ENCODE measurements at regions of chr20 and their contacts with region 1.

Region 1: DNA sequence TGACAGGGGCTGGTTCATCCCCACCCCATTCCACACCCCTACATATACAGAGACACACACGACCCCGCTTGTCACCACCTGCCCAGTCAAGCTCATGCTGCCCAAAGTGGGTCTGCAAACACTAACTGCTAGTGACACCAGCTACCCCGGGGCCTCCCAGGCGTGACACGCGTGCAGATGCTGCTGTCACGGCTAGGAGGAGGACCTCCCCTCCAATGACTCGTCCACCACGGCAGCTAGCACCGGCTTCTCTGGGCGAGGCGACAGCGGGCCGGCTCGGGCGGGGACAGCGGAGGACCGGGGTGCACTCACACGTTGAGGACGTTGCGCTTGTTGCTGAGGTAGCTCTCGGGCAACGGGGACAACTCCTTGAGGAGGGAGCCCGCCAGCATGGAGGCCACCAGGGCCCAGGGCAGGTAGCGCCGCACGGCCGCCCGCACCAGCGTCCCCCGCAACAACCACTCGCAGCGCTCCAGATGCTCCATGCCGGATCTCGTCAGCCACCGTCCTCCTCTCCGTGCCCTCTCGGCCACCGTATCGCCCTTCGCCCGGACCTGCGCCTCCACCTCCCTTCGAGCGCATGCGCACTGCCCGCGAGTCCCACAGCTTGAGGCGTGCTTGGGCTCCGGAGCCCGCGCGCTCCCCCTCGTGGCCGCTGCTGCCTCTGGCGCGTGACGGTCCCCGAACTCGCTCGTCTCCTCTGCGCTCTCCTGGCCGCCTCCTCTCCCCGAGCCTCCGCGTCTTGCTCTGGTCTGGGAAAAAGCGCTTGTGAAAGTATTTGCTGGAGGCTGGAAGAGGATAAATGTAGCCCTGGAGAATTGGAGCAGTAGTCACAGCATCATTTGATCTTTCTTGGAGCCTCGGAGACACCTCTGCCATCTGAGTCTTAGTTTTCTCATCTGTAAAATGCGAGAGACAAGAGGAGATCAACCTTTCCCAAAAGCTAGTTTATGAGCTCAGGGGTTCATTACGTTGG is at the start of gene FITM2:
- DNase-seq: peak; percentile 99
- H3K4me3 ChIP-seq: peak within 1 kb of the TSS; percentile 84 to 98 (median 92)
- H3K27ac ChIP-seq: peak within 1 kb of the TSS; percentile 76 to 80 (median 79)
- H3K4me1 ChIP-seq: peaks cover 0 to 19% (median 17%) of the 10 kb centered on the region in 4 donors
- H3K27me3 ChIP-seq: no peaks in the 10 kb centered on the region
- CTCF ChIP-seq: peak; percentile 86 to 92 (median 86)
- EP300 ChIP-seq: no peak
- POLR2A ChIP-seq: no peak
- total RNA-seq, gene FITM2: 6.1 to 9.1 (median 7.4) TPM

Region 2: DNA sequence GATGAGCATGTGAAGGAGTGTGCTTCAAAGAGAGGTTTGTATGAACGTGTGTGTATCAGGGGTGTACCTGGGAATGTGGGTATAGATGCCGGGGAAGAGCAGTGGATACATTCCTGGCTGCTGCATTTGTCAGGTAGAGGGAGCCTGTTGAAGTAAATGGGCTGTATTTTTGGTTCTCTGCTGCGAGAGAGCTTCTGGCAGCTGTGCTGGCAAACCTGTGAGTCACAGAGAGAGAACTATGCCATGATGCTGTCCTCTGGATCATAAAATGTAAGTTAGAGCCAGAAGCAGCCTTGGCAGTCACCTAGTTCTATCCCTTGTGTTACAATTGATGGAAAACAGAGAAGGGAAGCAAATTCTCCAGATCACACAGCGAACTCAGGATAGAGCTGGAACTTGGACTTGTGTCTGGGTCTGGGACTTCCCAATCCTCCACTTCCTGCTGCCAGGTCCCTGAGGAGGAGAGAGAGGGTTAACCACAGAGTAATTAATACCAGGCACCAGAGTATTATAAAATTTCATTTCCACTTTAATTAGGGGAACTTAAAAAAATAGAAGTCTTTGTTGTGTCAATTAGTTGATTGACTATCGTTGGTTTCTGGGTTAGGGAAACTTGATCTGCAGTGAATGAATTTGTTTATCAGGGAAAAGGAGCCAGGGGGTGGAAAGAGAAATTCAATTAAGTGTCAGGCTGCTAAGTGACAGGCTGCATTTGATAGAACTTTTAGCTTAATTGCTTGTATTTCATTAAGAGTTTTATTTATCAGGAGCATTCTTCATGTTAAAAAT is 543.1 kb before region 1 on chr20:
- intact Hi-C with region 1: loop called (anchors 10 kb)
- DNase-seq: no peak
- H3K4me3 ChIP-seq: no peak overlapping the region
- H3K27ac ChIP-seq: peak overlapping the region in 3 of 4 donors; percentile 26 to 48 (median 31)
- H3K4me1 ChIP-seq: peaks cover 0 to 24% (median 20%) of the 10 kb centered on the region in 4 donors
- H3K27me3 ChIP-seq: peaks cover 0 to 6% (median 0%) of the 10 kb centered on the region in 3 donors
- CTCF ChIP-seq: no peak
- EP300 ChIP-seq: no peak
- POLR2A ChIP-seq: no peak

Region 3: GRCh38 chr20:44115762-44116644 is 194.9 kb before region 1 on chr20:
- intact Hi-C with region 1: loop called (anchors 5 kb)
- DNase-seq: no peak
- H3K4me3 ChIP-seq: no peak overlapping the region
- H3K27ac ChIP-seq: peak overlapping the region; percentile 74 to 82 (median 78)
- H3K4me1 ChIP-seq: peaks cover 0 to 90% (median 68%) of the 10 kb centered on the region in 4 donors
- H3K27me3 ChIP-seq: peaks cover 0 to 15% (median 0%) of the 10 kb centered on the region in 3 donors
- CTCF ChIP-seq: no peak
- EP300 ChIP-seq: no peak
- POLR2A ChIP-seq: no peak

Region 4: GRCh38 chr20:44398303-44398702 is 87.4 kb after region 1 on chr20:
- intact Hi-C with region 1: no loop called
- DNase-seq: no peak
- H3K4me3 ChIP-seq: no peak overlapping the region
- H3K27ac ChIP-seq: no peak overlapping the region
- H3K4me1 ChIP-seq: no peaks in the 10 kb centered on the region
- H3K27me3 ChIP-seq: peaks cover 0 to 12% (median 0%) of the 10 kb centered on the region in 3 donors
- CTCF ChIP-seq: no peak
- EP300 ChIP-seq: no peak
- POLR2A ChIP-seq: no peak

Region 5: GRCh38 chr20:44733341-44734069 is 422.6 kb after region 1 on chr20:
- intact Hi-C with region 1: loop called (anchors 10 kb)
- DNase-seq: peak; percentile 86
- H3K4me3 ChIP-seq: no peak overlapping the region
- H3K27ac ChIP-seq: no peak overlapping the region
- H3K4me1 ChIP-seq: peaks cover 0 to 39% (median 23%) of the 10 kb centered on the region in 4 donors
- H3K27me3 ChIP-seq: no peaks in the 10 kb centered on the region
- CTCF ChIP-seq: peak; percentile 87 to 91 (median 87)
- EP300 ChIP-seq: no peak
- POLR2A ChIP-seq: no peak

Region 6: DNA sequence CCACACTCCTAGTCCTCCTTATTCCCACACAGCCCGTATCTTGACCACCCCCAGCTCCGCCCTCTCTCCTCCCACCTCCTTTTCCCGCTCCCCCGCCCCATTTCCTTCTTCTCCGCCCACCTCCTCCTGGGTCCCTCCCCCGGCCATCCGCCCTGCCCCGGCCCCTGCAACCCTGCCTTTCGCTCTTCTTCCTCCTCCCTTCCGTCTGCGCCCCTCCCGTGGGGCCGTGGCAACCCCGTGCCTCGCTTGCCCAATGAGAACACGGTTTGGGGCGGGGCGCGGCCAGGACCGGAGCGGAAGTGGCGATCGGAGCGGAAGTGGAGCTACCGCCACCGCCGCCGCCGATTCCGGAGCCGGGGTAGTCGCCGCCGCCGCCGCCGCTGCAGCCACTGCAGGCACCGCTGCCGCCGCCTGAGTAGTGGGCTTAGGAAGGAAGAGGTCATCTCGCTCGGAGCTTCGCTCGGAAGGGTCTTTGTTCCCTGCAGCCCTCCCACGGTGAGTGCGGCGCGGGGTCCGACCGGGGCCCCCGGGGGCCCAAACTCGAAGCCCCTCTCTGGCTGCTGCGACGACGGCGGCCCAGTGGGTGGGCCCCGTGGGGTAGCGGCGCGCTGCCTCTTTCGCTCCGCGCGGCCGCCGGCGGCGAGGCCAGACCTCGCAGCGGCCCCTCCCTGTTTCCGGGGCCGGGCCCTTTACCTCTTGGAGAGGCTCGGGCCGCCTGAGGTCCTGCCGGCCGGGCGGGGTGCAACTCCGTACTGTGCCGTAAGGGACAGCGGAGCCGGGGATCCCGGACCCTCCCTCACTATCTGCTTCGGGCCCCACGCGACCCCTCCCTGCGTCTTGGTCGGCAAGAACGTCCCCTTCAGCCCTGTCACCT is 574.7 kb after region 1 on chr20 and contains the start of gene YWHAB:
- intact Hi-C with region 1: loop called (anchors 10 kb)
- DNase-seq: peak; percentile 99
- H3K4me3 ChIP-seq: peak within 1 kb of the TSS; percentile 92 to 99 (median 96)
- H3K27ac ChIP-seq: peak within 1 kb of the TSS; percentile 96 to 99 (median 98)
- H3K4me1 ChIP-seq: peaks cover 0 to 49% (median 42%) of the 10 kb centered on the region in 4 donors
- H3K27me3 ChIP-seq: no peaks in the 10 kb centered on the region
- CTCF ChIP-seq: peak in 1 of 4 experiments; percentile 26
- EP300 ChIP-seq: no peak
- POLR2A ChIP-seq: peak; percentile 69 to 80
- total RNA-seq, gene YWHAB: 80.3 to 110 (median 89.8) TPM

Measured in sigmoid colon (tissue), 7 donors.